ENCODE measurements at regions of chr12 and their contacts with region 1.

Region 1: DNA sequence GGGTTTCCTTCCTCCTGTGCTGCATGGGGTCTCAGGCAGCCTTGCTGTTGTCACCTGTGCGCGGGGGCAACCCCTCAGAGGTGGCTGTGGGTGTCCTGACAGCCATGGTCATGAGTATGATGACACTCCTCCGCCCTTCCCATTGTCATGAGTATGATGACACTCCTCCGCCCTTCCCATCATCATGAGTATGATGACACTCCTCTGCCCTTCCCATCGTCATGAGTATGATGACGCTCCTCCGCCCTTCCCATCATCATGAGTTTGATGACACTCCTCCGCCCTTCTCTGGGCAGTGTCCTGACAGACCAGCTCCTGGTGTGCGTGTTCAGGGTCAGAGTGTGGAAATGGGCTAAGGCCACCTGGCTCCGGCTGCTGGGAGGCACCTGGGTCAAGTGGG is 40.0 kb downstream of the FBRSL1 start:
- DNase-seq: no peak
- ATAC-seq: no peak
- H3K4me3 ChIP-seq: no peak overlapping the region
- H3K27ac ChIP-seq: no peak overlapping the region
- H3K4me1 ChIP-seq: peaks cover 17% of the 10 kb centered on the region
- H3K27me3 ChIP-seq: no peaks in the 10 kb centered on the region
- CTCF ChIP-seq: no peak

Region 2: DNA sequence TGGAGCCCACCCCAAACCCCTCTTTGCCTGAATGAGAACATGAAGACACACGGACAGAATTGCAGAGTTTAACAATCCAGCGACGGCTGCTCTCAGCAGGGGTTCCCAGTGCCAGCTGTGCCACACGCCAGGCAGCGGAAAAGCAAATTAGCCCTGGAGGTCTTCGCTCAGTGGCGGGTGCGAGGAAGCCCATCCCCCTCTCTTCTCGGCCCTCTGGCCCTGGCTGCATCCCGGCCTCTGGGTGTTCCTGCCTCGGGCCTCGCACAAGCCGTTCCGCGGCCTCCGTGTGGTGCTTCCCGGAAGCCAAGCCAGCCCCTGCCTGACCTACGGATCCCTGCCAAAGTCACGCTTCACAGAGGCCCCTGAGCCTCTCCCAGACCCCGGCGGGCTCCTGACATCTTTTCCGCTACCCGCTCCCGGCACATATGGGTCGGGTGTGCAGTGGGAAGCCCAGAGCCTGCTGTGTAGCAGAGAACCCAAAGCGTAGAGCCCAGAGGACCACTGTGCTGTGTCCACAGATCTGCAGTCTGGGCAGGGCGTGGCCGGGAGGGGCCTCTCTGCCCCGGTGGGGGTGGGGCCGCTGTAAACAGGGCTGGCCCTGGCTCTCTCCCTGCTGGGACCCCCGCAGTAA is 129.8 kb before region 1 on chr12:
- CTCF ChIA-PET with region 1: interaction called, 13 read pairs
- POLR2A ChIA-PET with region 1: no interaction called
- in situ Hi-C with region 1: no loop called
- intact Hi-C with region 1: no loop called
- DNase-seq: no peak
- ATAC-seq: no peak; the same call in 1 of the 2 replicates
- H3K4me3 ChIP-seq: no peak overlapping the region
- H3K27ac ChIP-seq: no peak overlapping the region
- H3K4me1 ChIP-seq: no peaks in the 10 kb centered on the region; the same call in 1 of the 2 replicates
- H3K27me3 ChIP-seq: no peaks in the 10 kb centered on the region
- CTCF ChIP-seq: no peak

Region 3: DNA sequence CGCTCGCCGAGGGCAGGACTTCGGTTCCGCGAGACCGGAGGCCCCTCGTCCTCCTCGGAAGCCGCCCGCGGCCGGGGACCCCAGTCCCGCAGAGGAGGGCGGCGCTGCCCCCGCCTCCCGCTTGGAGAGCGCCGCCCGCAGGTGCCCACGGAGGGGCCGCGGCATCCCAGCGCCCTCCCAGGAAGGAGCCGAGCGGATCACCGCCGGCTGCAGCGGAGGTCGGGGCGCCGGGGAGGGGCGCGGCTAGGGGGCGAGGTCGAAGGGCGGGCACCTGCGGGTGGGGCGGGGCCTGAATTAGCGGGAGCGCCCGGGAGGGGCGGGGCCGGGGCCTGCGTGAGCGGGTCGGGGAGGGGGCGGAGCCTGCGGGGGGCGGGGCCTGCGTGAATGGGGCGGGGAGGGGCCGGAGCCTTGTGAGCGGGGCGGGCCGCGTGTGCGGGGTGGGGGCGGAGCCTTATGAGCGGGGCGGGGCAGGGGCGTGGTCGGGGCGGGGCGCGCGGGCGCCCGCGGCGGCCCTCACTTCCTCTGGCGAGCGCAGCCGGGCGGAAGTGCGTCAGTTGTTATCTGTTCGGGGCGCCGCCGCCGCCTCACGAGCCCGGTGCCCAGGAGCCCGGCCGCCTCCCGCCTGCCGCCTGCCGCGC is 40.2 kb before region 1 on chr12 and contains the start of gene FBRSL1:
- CTCF ChIA-PET with region 1: no interaction called
- POLR2A ChIA-PET with region 1: no interaction called
- in situ Hi-C with region 1: no loop called
- intact Hi-C with region 1: no loop called
- DNase-seq: no peak
- ATAC-seq: peak; percentile 84
- H3K4me3 ChIP-seq: peak within 1 kb of the TSS; percentile 73 to 84
- H3K27ac ChIP-seq: peak within 1 kb of the TSS; percentile 70
- H3K4me1 ChIP-seq: peaks cover 39% of the 10 kb centered on the region
- H3K27me3 ChIP-seq: no peaks in the 10 kb centered on the region
- CTCF ChIP-seq: no peak
- total RNA-seq, gene FBRSL1: 104 TPM

Region 4: DNA sequence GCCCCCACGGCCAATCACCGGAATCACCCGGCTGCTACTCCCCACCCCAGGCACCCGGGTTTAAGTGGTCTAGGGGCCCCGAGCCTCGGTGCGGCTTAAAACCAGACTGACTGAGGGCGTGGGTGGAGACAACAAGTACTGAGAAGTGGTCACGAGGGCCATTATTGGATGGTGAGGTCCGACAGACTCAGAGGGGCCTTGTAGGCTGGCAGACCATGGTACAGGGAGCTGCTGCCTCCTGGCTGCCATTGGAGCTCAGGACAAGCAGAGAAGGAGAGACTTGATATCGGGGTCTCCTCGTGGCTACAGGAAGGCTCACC is 14.1 kb after region 1 on chr12:
- CTCF ChIA-PET with region 1: no interaction called
- POLR2A ChIA-PET with region 1: no interaction called
- in situ Hi-C with region 1: no loop called
- intact Hi-C with region 1: no loop called
- DNase-seq: no peak
- ATAC-seq: no peak
- H3K4me3 ChIP-seq: no peak overlapping the region
- H3K27ac ChIP-seq: no peak overlapping the region
- H3K4me1 ChIP-seq: no peaks in the 10 kb centered on the region
- H3K27me3 ChIP-seq: no peaks in the 10 kb centered on the region
- CTCF ChIP-seq: no peak; the same call in 1 of the 2 replicates

Region 5: GRCh38 chr12:132710422-132711168 is 180.7 kb after region 1 on chr12 and contains the start of gene PGAM5:
- CTCF ChIA-PET with region 1: no interaction called
- POLR2A ChIA-PET with region 1: no interaction called
- in situ Hi-C with region 1: no loop called
- intact Hi-C with region 1: no loop called
- DNase-seq: no peak
- ATAC-seq: peak; percentile 93
- H3K4me3 ChIP-seq: peak within 1 kb of the TSS; percentile 67 to 90
- H3K27ac ChIP-seq: peak within 1 kb of the TSS; percentile 90
- H3K4me1 ChIP-seq: peaks cover 6% of the 10 kb centered on the region; the same call in 1 of the 2 replicates
- H3K27me3 ChIP-seq: no peaks in the 10 kb centered on the region
- CTCF ChIP-seq: no peak
- total RNA-seq, gene PGAM5: 116 TPM

Measured in Panc1 (cell line).